IMR-90 (cell line): ENCODE measurements at regions of chr20 and their contacts with region 1.

Region 1: GRCh38 chr20:41428285-41428684 is 61.7 kb upstream of the EMILIN3 start:
- DNase-seq: peak; percentile 86
- ATAC-seq: peak; percentile 80
- H3K4me3 ChIP-seq: no peak overlapping the region
- H3K27ac ChIP-seq: no peak overlapping the region
- H3K4me1 ChIP-seq: peaks cover 21% of the 10 kb centered on the region
- H3K27me3 ChIP-seq: no peaks in the 10 kb centered on the region
- CTCF ChIP-seq: no peak
- POLR2A ChIP-seq: no peak
- RAD21 ChIP-seq: no peak

Region 2: GRCh38 chr20:41411391-41411847 is 16.9 kb before region 1 on chr20:
- CTCF ChIA-PET with region 1: interaction called, 11 read pairs
- POLR2A ChIA-PET with region 1: interaction called, 4 read pairs
- dilution Hi-C with region 1: no loop called
- in situ Hi-C with region 1: no loop called
- intact Hi-C with region 1: no loop called
- DNase-seq: peak; percentile 28
- ATAC-seq: peak; percentile 51
- H3K4me3 ChIP-seq: no peak overlapping the region
- H3K27ac ChIP-seq: no peak overlapping the region
- H3K4me1 ChIP-seq: no peaks in the 10 kb centered on the region
- H3K27me3 ChIP-seq: no peaks in the 10 kb centered on the region
- CTCF ChIP-seq: peak; percentile 45
- POLR2A ChIP-seq: no peak
- RAD21 ChIP-seq: peak; percentile 57

Region 3: GRCh38 chr20:41482647-41483552 is 54.6 kb after region 1 on chr20:
- CTCF ChIA-PET with region 1: no interaction called
- POLR2A ChIA-PET with region 1: no interaction called
- dilution Hi-C with region 1: no loop called
- in situ Hi-C with region 1: no loop called
- intact Hi-C with region 1: loop called (anchors 2 kb)
- DNase-seq: peak; percentile 93
- ATAC-seq: peak; percentile 92
- H3K4me3 ChIP-seq: no peak overlapping the region
- H3K27ac ChIP-seq: peak overlapping the region; percentile 99
- H3K4me1 ChIP-seq: peaks cover 12% of the 10 kb centered on the region
- H3K27me3 ChIP-seq: no peaks in the 10 kb centered on the region
- CTCF ChIP-seq: no peak
- POLR2A ChIP-seq: no peak
- RAD21 ChIP-seq: no peak

Region 4: GRCh38 chr20:41617931-41618806 is 189.9 kb after region 1 on chr20 and contains the start of gene CHD6:
- CTCF ChIA-PET with region 1: no interaction called
- POLR2A ChIA-PET with region 1: no interaction called
- dilution Hi-C with region 1: no loop called
- in situ Hi-C with region 1: no loop called
- intact Hi-C with region 1: loop called (anchors 5 kb)
- DNase-seq: peak; percentile 99
- ATAC-seq: peak; percentile 98
- H3K4me3 ChIP-seq: peak within 1 kb of the TSS; percentile 85
- H3K27ac ChIP-seq: peak within 1 kb of the TSS; percentile 59
- H3K4me1 ChIP-seq: peaks cover 4% of the 10 kb centered on the region
- H3K27me3 ChIP-seq: peaks cover 7% of the 10 kb centered on the region; the same call in 1 of the 2 replicates
- CTCF ChIP-seq: no peak
- POLR2A ChIP-seq: peak; percentile 39; the same call in 1 of the 2 replicates
- RAD21 ChIP-seq: no peak
- total RNA-seq, gene CHD6: 26.7 and 31.7 TPM in 2 replicates

Region 5: GRCh38 chr20:41811456-41811855 is 383.2 kb after region 1 on chr20:
- CTCF ChIA-PET with region 1: no interaction called
- POLR2A ChIA-PET with region 1: no interaction called
- dilution Hi-C with region 1: no loop called
- in situ Hi-C with region 1: no loop called
- intact Hi-C with region 1: no loop called
- DNase-seq: no peak
- ATAC-seq: no peak
- H3K4me3 ChIP-seq: no peak overlapping the region
- H3K27ac ChIP-seq: no peak overlapping the region
- H3K4me1 ChIP-seq: no peaks in the 10 kb centered on the region
- H3K27me3 ChIP-seq: no peaks in the 10 kb centered on the region
- CTCF ChIP-seq: no peak
- POLR2A ChIP-seq: no peak
- RAD21 ChIP-seq: no peak